ENCODE measurements at regions of chr10 and their contacts with region 1.

Region 1: GRCh38 chr10:103888113-103888841 is 29.7 kb downstream of the STN1 start:
- H3K4me3 ChIP-seq: no peak overlapping the region
- H3K27ac ChIP-seq: no peak overlapping the region
- H3K4me1 ChIP-seq: no peaks in the 10 kb centered on the region
- CTCF ChIP-seq: peak; percentile 64; the same call in 1 of the 2 replicates

Region 2: DNA sequence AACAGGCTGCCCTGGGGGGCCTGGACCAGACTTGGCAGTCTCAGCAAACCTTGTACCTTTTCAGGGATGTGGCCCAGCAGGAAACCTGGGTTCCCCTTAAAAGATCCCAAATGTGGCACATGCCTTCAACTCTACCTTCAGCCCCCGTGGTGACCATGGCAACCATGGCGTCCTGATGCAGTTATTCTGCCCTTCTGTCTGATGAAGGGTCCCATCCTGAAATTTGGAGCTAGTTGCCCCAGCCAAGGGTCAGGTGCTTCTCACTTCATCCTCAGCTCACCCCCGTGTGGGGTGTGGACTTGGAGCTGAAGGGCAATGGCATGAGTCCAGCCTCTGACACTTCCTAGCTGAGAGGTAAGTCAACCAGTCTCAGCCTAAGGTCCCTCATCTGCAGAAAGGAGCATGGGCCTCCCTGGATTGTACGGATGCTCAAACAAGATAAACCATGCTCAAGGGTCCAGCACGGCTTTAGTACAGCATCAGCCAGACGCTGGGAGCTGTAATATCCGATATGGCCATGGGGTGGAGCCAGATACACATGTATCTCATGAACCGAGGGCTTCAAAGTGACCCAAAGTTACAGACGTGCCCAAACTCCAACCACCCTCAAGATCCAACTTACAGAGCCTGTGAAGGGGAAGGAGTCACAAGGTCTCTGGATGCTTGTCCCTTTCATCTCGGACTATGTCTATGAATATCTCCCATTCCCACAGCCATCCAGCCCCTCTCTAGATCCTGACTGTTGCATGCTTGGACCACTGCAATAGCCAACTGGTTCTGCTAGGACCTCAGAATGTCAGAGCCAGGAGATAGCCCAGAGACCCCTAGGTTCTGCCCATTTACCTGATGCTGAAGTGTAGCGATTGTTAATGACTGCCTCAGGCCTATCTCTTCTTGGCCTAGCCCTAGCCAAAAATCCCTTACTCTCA is 175.4 kb before region 1 on chr10:
- CTCF ChIA-PET with region 1: interaction called, 151 read pairs
- POLR2A ChIA-PET with region 1: interaction called, 4 read pairs
- H3K4me3 ChIP-seq: no peak overlapping the region
- H3K27ac ChIP-seq: no peak overlapping the region
- H3K4me1 ChIP-seq: no peaks in the 10 kb centered on the region
- CTCF ChIP-seq: peak; percentile 73

Region 3: DNA sequence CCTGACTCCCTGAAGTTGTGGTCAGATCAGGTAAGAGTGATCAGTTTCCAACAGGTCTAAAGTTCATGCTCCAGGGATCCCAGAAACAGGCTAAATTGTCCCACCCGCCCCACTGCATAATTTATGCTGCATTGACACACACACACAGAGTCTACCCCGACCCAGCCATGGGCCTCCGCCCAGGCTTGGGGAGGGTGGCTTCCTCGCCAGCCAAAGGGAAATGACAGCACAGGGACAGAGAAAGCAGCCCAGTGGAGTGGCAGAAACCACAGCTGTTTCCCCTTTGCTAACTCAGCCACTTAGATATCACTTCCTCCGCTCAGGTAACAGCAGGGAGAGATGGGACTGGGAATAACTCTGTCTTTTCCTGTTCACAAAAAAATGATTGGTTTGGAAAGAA is 42.3 kb before region 1 on chr10:
- CTCF ChIA-PET with region 1: no interaction called
- POLR2A ChIA-PET with region 1: no interaction called
- H3K4me3 ChIP-seq: no peak overlapping the region
- H3K27ac ChIP-seq: no peak overlapping the region
- H3K4me1 ChIP-seq: no peaks in the 10 kb centered on the region
- CTCF ChIP-seq: no peak

Region 4: DNA sequence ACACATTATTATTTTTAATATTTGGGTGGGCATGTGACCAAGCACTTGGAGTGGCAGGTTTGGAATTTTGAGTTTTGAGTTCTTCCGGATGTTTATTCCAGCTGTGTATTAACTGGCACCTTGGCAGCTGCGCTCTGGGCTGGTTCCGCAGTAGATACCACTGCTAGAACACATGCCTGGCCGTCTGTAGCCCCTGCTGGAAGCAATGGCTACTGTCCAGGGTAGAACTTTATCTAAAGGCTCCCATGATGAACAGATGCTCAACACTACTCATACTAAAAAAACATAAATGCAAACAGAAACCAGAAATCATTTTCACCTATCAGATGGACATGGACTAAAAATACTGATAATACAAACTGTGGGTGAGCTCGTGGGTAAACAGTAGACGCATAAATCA is 13.5 kb before region 1 on chr10:
- CTCF ChIA-PET with region 1: interaction called, 19 read pairs
- POLR2A ChIA-PET with region 1: no interaction called
- H3K4me3 ChIP-seq: no peak overlapping the region
- H3K27ac ChIP-seq: no peak overlapping the region
- H3K4me1 ChIP-seq: no peaks in the 10 kb centered on the region
- CTCF ChIP-seq: no peak

Region 5: GRCh38 chr10:103968441-103969391 is 80.4 kb after region 1 on chr10:
- CTCF ChIA-PET with region 1: interaction called, 10 read pairs
- POLR2A ChIA-PET with region 1: interaction called, 3 read pairs
- H3K4me3 ChIP-seq: peak overlapping the region; percentile 89
- H3K27ac ChIP-seq: no peak overlapping the region
- H3K4me1 ChIP-seq: peaks cover 5% of the 10 kb centered on the region; the same call in 1 of the 2 replicates
- CTCF ChIP-seq: no peak

Region 6: GRCh38 chr10:104121520-104122224 is 233.4 kb after region 1 on chr10 and contains the start of gene SFR1:
- CTCF ChIA-PET with region 1: interaction called, 21 read pairs
- POLR2A ChIA-PET with region 1: interaction called, 4 read pairs
- H3K4me3 ChIP-seq: peak within 1 kb of the TSS; percentile 73
- H3K27ac ChIP-seq: peak within 1 kb of the TSS; percentile 92
- H3K4me1 ChIP-seq: peaks cover 4% of the 10 kb centered on the region
- CTCF ChIP-seq: peak; percentile 95

Region 7: DNA sequence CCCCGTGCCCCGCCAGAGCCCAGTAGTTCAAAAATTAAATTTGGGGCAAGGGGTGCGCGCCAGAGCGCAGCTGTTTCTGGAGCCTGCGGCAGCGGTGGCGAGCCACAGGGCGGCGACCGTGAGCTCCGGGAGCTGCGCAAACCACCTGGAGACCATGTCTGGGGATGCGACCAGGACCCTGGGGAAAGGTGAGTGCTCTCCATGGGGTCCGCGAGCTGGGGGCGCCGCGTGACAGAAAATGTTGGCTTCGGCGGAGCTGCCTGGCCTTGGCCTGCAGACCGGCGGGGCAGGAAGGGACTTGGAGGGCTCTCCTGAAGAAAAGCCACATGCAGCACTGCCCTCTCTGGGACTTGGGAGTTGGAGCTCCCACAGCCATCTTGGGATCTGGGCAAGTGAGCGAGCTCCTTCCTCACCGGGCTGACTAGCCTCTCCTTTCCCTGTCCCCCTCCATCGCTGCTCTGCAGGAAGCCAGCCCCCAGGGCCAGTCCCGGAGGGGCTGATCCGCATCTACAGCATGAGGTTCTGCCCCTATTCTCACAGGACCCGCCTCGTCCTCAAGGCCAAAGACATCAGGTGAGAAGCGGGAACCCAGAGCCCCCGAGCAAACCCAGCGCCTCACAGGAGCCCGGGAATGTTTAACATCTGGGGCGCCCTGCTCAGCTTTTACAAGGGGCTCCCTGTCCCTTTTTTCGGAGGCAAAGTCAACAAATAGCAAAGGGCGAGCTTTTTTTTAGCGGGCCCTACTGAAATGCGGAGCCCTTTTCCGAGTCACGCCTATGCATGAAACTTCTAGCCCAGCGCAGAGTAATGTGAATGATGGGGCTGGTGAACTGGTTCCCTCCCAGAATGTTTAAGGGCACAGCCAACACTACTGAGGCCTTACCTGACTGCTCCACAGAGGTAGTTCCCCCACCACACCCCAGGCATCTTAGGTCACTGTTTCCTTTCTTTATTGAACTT is 386.8 kb after region 1 on chr10:
- CTCF ChIA-PET with region 1: interaction called, 11 read pairs
- POLR2A ChIA-PET with region 1: no interaction called
- H3K4me3 ChIP-seq: peak overlapping the region; percentile 33
- H3K27ac ChIP-seq: no peak overlapping the region
- H3K4me1 ChIP-seq: no peaks in the 10 kb centered on the region
- CTCF ChIP-seq: peak; percentile 86